HepG2 (cell line): ENCODE measurements at regions of chr19 and their contacts with region 1.

Region 1: DNA sequence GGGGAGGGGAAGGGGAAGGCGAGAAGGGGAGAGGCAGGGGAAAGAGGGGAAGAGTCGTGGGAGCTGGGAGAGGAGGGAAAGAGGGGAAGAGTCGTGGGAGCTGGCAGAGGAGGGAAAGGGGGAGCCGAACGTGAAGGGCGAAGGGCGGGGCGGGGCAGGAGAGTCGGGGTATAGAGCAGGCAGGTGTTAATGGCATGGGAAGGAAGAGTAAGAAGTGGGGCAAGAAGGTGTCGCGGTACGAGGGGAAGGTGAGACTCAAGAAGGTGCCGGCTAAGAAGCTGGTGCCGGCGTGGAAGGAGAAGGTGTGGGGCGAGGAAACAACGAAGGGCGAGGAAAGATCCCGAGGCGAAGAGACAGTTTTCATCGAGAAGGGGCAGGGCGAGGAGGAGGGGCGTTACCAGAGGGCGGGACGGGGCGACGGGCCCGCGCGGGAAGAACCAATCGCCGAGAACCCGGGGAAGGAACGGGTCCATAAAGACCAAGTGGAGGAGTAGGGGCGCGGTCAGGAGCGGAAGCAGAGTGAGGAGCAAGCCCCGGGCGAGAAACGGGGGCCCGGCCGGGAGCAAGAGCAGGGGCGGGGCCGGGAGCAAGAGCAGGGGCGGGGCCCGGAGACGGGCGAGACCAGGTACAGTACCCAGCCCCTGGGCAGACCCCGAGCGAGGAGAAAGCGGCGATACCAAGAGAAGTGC is 463 bp downstream of the CATSPERG start:
- DNase-seq: peak; percentile 86
- ATAC-seq: peak; percentile 89
- H3K4me3 ChIP-seq: peak overlapping the region; percentile 74 to 85 (median 75)
- H3K27ac ChIP-seq: peak overlapping the region; percentile 42
- H3K4me1 ChIP-seq: peaks cover 10% of the 10 kb centered on the region
- H3K27me3 ChIP-seq: no peaks in the 10 kb centered on the region
- CTCF ChIP-seq: no peak
- EP300 ChIP-seq: no peak
- POLR2A ChIP-seq: no peak
- RAD21 ChIP-seq: no peak

Region 2: DNA sequence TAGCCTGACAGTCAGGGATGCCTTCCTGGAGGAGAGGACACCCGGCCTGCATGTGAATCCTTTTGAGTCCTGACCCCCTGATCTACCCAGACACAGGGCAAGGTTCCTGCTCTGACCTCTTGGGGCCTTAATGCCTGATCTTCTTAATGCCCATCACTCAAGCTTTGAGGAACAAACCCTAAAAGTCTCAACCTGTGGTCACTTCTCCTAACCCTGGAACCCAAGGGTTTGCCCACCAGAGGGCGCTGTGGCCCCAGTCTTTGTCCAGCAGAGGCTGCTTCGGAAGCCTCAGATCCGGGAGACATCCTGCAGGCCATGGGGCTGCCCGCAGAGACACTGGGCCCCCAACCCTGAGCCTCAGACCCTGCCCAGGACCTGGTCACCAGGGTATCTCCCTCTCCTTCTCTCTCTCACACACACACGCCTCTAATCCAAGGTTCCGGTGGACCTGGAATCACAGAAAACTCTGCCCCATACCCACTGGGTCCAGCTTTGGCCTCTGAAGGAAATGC is 102.3 kb before region 1 on chr19:
- CTCF ChIA-PET with region 1: interaction called, 27 read pairs
- POLR2A ChIA-PET with region 1: no interaction called
- in situ Hi-C with region 1: no loop called
- intact Hi-C with region 1: loop called (anchors 2 kb)
- DNase-seq: peak; percentile 58
- ATAC-seq: peak; percentile 85
- H3K4me3 ChIP-seq: no peak overlapping the region
- H3K27ac ChIP-seq: no peak overlapping the region
- H3K4me1 ChIP-seq: peaks cover 4% of the 10 kb centered on the region
- H3K27me3 ChIP-seq: peaks cover 1 to 4% of the 10 kb centered on the region in 2 experiments; a peak in 3 of 5 replicates
- CTCF ChIP-seq: peak; percentile 91
- EP300 ChIP-seq: no peak
- POLR2A ChIP-seq: no peak
- RAD21 ChIP-seq: peak; percentile 82

Region 3: DNA sequence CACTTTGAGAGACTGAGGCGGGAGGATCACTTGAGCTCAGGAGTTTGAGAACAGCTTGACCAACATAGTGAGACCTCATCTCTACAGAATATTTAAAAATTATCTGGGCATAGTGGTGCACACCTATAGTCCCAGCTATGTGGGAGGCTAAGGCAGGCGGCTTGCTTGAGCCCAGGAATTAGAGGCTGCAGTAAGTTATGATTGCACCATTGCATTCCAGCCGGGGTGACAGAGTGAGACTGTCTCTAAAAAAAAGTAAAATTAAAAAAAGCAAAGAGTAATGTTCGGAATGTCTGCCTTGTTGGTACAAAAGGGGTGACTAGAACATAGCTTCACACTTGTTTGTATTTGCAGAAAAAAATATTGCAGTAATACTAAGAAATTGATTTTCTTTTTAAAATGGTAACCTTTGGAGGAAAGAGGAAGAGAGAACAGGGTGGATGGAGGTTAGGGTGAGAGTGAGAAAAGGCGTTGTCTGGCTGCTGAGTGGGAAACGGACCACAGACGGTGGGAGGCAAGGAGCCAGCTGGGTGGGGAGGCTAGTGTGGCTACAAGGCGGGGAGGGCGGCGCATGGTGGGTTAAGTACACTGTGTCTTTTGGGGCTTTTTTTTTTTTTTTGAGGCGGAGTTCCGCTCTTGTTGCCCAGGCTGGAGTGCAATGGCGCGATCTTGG is 90.1 kb before region 1 on chr19:
- CTCF ChIA-PET with region 1: interaction called, 62 read pairs
- POLR2A ChIA-PET with region 1: no interaction called
- in situ Hi-C with region 1: loop called (anchors 5 kb)
- intact Hi-C with region 1: no loop called
- DNase-seq: no peak
- ATAC-seq: no peak
- H3K4me3 ChIP-seq: no peak overlapping the region
- H3K27ac ChIP-seq: no peak overlapping the region
- H3K4me1 ChIP-seq: peaks cover 34% of the 10 kb centered on the region
- H3K27me3 ChIP-seq: no peaks in the 10 kb centered on the region
- CTCF ChIP-seq: no peak
- EP300 ChIP-seq: no peak
- POLR2A ChIP-seq: no peak
- RAD21 ChIP-seq: no peak